BJ (cell line): ENCODE measurements at regions of chr1 and their contacts with region 1.

Region 1: GRCh38 chr1:244796718-244797406 is 38.6 kb upstream of the COX20 start:
- DNase-seq: peak; percentile 4
- H3K4me3 ChIP-seq: no peak overlapping the region
- H3K27me3 ChIP-seq: no peaks in the 10 kb centered on the region
- CTCF ChIP-seq: peak; percentile 73

Region 2: DNA sequence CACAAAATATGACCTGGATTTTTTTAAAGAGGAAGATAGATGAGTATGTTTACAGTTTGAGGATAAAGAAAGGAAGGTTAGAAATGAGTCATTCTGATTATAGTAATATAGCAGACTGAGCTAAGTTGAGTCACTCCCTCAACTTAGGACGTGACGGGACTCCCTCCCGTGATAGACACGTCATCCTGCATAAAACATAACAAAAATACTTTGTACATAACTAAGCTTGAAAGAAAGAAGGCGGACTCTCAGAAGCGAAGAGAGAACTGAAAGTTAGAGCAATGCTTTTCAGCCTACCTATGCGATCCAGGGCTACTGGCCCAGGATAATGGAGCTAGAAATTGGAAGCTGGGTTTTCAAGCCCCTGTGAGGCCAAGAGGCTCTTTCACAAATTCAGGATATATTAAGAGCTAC is 196.9 kb before region 1 on chr1:
- CTCF ChIA-PET with region 1: interaction called, 94 read pairs
- POLR2A ChIA-PET with region 1: no interaction called
- DNase-seq: peak; percentile 77
- H3K4me3 ChIP-seq: peak overlapping the region; percentile 19; the same call in 1 of the 2 replicates
- H3K27me3 ChIP-seq: no peaks in the 10 kb centered on the region
- CTCF ChIP-seq: no peak

Region 3: GRCh38 chr1:244778361-244778760 is 18.5 kb before region 1 on chr1:
- CTCF ChIA-PET with region 1: interaction called, 10 read pairs
- POLR2A ChIA-PET with region 1: no interaction called
- DNase-seq: peak; percentile 40
- H3K4me3 ChIP-seq: no peak overlapping the region
- H3K27me3 ChIP-seq: peaks cover 2% of the 10 kb centered on the region; the same call in 1 of the 2 replicates
- CTCF ChIP-seq: no peak

Region 4: GRCh38 chr1:244815600-244816099 is 18.8 kb after region 1 on chr1:
- CTCF ChIA-PET with region 1: interaction called, 13 read pairs
- POLR2A ChIA-PET with region 1: no interaction called
- DNase-seq: no peak
- H3K4me3 ChIP-seq: no peak overlapping the region
- H3K27me3 ChIP-seq: peaks cover 5% of the 10 kb centered on the region
- CTCF ChIP-seq: no peak

Region 5: GRCh38 chr1:244840219-244840794 is 43.4 kb after region 1 on chr1:
- CTCF ChIA-PET with region 1: no interaction called
- POLR2A ChIA-PET with region 1: no interaction called
- DNase-seq: no peak
- H3K4me3 ChIP-seq: no peak overlapping the region
- H3K27me3 ChIP-seq: no peaks in the 10 kb centered on the region
- CTCF ChIP-seq: no peak

Region 6: DNA sequence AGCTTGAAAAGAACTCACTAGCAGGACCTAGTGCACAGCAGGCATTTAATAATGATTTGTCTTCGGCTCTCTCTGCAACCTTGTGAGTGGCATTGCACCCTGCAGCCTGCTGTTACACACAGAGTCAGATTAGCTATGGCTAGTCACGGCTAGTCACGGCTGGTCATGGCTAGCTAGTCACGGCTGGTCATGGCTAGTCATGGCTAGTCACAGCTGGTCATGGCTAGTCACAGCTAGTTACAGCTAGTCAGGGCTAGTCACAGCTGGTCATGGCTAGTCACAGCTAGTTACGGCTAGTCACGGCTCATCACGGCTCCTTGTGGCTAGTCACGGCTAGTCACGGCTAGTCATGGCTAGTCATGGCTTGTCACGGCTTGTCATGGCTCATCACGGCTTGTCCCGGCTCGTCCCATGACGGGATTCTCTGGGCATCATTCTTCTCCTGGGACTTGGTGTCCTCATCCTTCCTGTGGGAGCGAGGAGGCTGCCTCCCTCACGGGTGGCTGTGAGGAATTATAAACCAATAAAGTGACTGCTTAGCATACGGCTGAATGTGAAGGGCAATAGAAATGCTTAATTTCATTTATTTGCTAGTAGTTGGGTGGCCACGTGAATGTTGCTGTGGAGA is 345.4 kb after region 1 on chr1:
- CTCF ChIA-PET with region 1: no interaction called
- POLR2A ChIA-PET with region 1: no interaction called
- DNase-seq: no peak
- H3K4me3 ChIP-seq: no peak overlapping the region
- H3K27me3 ChIP-seq: peaks cover 3% of the 10 kb centered on the region; the same call in 1 of the 2 replicates
- CTCF ChIP-seq: no peak